ENCODE measurements at regions of chr2 and their contacts with region 1.

Region 1: GRCh38 chr2:161090411-161090810 is 69.8 kb upstream of the TANK start:
- DNase-seq: peak; percentile 74
- H3K4me3 Mint-ChIP-seq: no peak overlapping the region
- H3K27ac Mint-ChIP-seq: peak overlapping the region; percentile 68
- H3K4me1 Mint-ChIP-seq: peaks cover 33% of the 10 kb centered on the region
- H3K27me3 Mint-ChIP-seq: no peaks in the 10 kb centered on the region

Region 2: DNA sequence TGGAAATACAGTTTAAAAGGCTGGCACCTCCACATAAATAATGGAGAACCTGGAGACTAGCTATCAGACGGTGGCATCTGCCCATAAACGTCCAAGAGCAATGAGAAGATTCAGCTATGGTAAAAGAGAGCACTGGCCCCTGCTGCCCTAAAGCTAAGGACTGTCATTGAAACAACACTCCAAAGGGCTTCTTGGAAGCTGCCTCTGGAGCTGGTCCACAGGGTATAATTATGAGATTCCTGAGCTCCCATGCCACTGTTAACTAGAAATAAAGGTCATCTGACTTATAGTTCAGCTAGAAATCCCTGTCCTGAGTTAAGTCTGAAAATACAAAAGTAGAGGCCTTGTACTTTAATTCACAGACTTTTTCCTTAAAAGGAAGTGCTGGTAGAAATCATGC is 556.9 kb before region 1 on chr2:
- CTCF ChIA-PET with region 1: no interaction called
- intact Hi-C with region 1: no loop called
- DNase-seq: no peak
- H3K4me3 Mint-ChIP-seq: no peak overlapping the region
- H3K27ac Mint-ChIP-seq: no peak overlapping the region
- H3K4me1 Mint-ChIP-seq: no peaks in the 10 kb centered on the region
- H3K27me3 Mint-ChIP-seq: no peaks in the 10 kb centered on the region

Region 3: GRCh38 chr2:161104054-161104553 is 13.7 kb after region 1 on chr2:
- CTCF ChIA-PET with region 1: interaction called, 3 read pairs
- intact Hi-C with region 1: loop called (anchors 2 kb)
- DNase-seq: peak; percentile 35
- H3K4me3 Mint-ChIP-seq: no peak overlapping the region
- H3K27ac Mint-ChIP-seq: peak overlapping the region; percentile 54
- H3K4me1 Mint-ChIP-seq: peaks cover 34% of the 10 kb centered on the region
- H3K27me3 Mint-ChIP-seq: peaks cover 3% of the 10 kb centered on the region

Region 4: DNA sequence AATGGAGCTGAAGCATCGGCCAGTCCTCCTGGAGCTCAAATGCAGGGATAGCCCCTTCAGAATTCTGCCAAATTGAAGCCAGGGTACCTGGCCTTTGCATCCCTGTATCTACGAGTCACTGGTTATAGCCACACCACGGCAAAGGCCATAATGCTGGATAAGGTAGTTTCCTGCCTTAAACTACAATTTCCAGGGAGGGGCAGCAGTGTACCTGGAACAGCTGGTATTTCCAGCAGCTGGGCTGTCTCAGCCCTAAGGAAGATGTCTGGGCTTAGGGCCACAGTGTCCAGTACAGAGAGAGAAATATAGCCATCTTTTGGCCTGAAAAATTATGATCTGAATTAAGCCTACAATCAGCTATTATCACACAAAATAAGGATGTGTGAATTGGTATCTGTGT is 1433.8 kb after region 1 on chr2:
- CTCF ChIA-PET with region 1: no interaction called
- intact Hi-C with region 1: no loop called
- DNase-seq: no peak
- H3K4me3 Mint-ChIP-seq: no peak overlapping the region
- H3K27ac Mint-ChIP-seq: no peak overlapping the region
- H3K4me1 Mint-ChIP-seq: no peaks in the 10 kb centered on the region
- H3K27me3 Mint-ChIP-seq: no peaks in the 10 kb centered on the region

Measured in activated naive CD4-positive, alpha-beta T cell treated with anti-CD3 and anti-CD28 coated beads for 36 hours (primary cell).